CD4-positive, alpha-beta T cell (primary cell): ENCODE measurements at regions of chr10 and their contacts with region 1.

Region 1: GRCh38 chr10:16843252-16843870 is 26.1 kb upstream of the RSU1 start:
- DNase-seq: peak in 3 of 14 experiments; percentile 75 to 81 (median 79)
- ATAC-seq: peak; percentile 66
- H3K4me3 ChIP-seq: no peak overlapping the region
- H3K4me3 Mint-ChIP-seq: no peak overlapping the region
- H3K27ac ChIP-seq: no peak overlapping the region
- H3K27ac Mint-ChIP-seq: no peak overlapping the region
- H3K4me1 ChIP-seq: no peaks in the 10 kb centered on the region
- H3K4me1 Mint-ChIP-seq: peaks cover 7% of the 10 kb centered on the region
- H3K27me3 ChIP-seq: no peaks in the 10 kb centered on the region
- H3K27me3 Mint-ChIP-seq: no peaks in the 10 kb centered on the region
- CTCF ChIP-seq: peak; percentile 80

Region 2: DNA sequence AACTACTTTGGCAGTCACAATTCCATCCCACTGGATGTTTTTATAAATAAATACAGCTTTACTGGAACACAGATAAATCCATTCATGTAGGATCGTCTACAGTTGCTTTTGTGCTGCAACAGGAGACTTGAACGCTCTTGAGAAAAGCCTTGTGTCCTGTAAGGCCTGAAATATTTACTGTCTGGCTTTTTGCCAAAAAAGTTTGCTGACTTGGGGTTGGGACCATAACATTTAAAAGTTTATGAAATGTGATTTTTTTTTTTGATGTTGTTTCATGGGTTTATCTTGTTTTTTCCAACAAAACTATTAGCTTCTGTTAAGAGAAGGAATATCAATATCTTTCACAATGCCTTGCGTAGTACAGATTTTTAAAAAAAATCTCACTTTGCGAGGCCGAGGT is 912.0 kb before region 1 on chr10:
- CTCF ChIA-PET with region 1: no interaction called
- POLR2A ChIA-PET with region 1: no interaction called
- intact Hi-C with region 1: no loop called
- DNase-seq: no peak
- ATAC-seq: no peak
- H3K4me3 ChIP-seq: no peak overlapping the region
- H3K4me3 Mint-ChIP-seq: no peak overlapping the region
- H3K27ac ChIP-seq: no peak overlapping the region
- H3K27ac Mint-ChIP-seq: no peak overlapping the region
- H3K4me1 ChIP-seq: no peaks in the 10 kb centered on the region
- H3K4me1 Mint-ChIP-seq: no peaks in the 10 kb centered on the region
- H3K27me3 ChIP-seq: peaks cover 0 to 5% of the 10 kb centered on the region in 2 experiments
- H3K27me3 Mint-ChIP-seq: peaks cover 24% of the 10 kb centered on the region
- CTCF ChIP-seq: no peak

Region 3: GRCh38 chr10:16777473-16778370 is 65.6 kb before region 1 on chr10:
- CTCF ChIA-PET with region 1: no interaction called
- POLR2A ChIA-PET with region 1: no interaction called
- intact Hi-C with region 1: no loop called
- DNase-seq: peak in 5 of 14 experiments; percentile 6 to 83 (median 65)
- ATAC-seq: peak; percentile 75
- H3K4me3 ChIP-seq: no peak overlapping the region
- H3K4me3 Mint-ChIP-seq: peak overlapping the region; percentile 32
- H3K27ac ChIP-seq: no peak overlapping the region
- H3K27ac Mint-ChIP-seq: peak overlapping the region; percentile 81
- H3K4me1 ChIP-seq: peaks cover 20% of the 10 kb centered on the region
- H3K4me1 Mint-ChIP-seq: peaks cover 39% of the 10 kb centered on the region
- H3K27me3 ChIP-seq: no peaks in the 10 kb centered on the region
- H3K27me3 Mint-ChIP-seq: no peaks in the 10 kb centered on the region
- CTCF ChIP-seq: peak; percentile 89

Region 4: DNA sequence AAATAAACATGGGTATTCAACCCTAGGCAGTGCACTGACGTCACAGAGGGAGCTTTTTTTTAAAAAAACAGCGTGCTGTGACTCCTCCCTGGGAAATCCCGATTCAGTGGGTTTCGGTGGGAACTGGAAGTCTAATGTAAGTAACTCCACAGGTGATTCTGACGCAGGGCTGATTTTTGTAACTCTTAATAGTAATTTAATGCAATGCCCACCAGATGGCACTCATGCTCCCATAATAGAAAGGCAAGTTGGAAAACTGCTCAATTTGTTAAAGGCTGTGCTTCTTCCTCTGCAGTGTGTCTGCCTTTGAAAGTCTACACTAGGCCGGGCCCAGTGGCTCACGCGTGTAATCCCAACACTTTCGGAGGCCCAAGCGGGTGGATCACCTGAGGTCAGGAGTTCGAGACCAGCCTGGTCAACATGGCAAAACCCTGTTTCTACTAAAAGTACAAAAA is 15.2 kb before region 1 on chr10:
- CTCF ChIA-PET with region 1: no interaction called
- POLR2A ChIA-PET with region 1: no interaction called
- intact Hi-C with region 1: loop called (anchors 1 kb)
- DNase-seq: peak; percentile 30 to 88 (median 51)
- ATAC-seq: peak; percentile 99
- H3K4me3 ChIP-seq: no peak overlapping the region
- H3K4me3 Mint-ChIP-seq: no peak overlapping the region
- H3K27ac ChIP-seq: no peak overlapping the region
- H3K27ac Mint-ChIP-seq: no peak overlapping the region
- H3K4me1 ChIP-seq: peaks cover 8% of the 10 kb centered on the region
- H3K4me1 Mint-ChIP-seq: peaks cover 7% of the 10 kb centered on the region
- H3K27me3 ChIP-seq: no peaks in the 10 kb centered on the region
- H3K27me3 Mint-ChIP-seq: no peaks in the 10 kb centered on the region
- CTCF ChIP-seq: peak; percentile 63

Region 5: DNA sequence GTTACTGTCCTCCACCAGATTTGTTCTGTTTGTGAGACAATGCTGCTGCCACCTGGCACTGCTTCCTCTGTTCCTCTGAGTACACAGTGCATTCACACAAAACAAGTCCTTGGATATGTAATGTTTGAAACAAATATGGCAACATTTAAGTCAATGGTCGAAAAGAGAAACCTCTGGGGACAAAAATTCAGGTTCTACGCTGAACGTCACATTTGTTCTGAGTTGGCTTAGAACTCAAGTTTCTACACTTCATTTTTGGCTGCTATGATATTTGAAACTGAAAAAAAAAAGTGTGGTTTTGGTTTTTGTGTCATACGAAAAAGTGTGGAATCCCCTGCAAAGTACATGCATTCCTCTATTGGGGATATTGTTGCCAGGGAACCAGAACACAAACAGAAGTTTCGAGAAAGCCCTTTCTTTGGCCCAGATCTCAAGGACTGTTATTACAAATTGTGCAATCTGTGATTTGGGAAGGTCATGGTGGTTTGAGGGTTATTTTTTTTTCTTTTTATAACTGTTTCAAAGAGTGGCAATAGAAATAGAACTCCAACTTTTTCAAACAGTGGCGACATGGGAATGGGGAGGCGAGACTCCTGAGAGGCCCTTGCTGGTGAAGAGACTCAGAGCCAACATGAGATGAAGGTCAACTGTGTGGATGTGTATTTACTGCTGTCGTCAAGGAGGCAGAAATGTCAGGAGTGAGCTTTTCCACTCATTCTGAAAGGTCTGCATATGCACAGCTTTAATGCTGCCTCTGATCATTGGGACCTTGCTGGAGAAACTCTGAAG is 158.8 kb after region 1 on chr10:
- CTCF ChIA-PET with region 1: no interaction called
- POLR2A ChIA-PET with region 1: no interaction called
- intact Hi-C with region 1: loop called in 1 of 2 experiments (anchors 10 kb)
- DNase-seq: peak in 4 of 14 experiments; percentile 38 to 92 (median 70)
- ATAC-seq: peak; percentile 40
- H3K4me3 ChIP-seq: no peak overlapping the region
- H3K4me3 Mint-ChIP-seq: peak overlapping the region; percentile 59
- H3K27ac ChIP-seq: peak overlapping the region; percentile 21 to 58
- H3K27ac Mint-ChIP-seq: peak overlapping the region; percentile 95
- H3K4me1 ChIP-seq: peaks cover 28% of the 10 kb centered on the region
- H3K4me1 Mint-ChIP-seq: peaks cover 66% of the 10 kb centered on the region
- H3K27me3 ChIP-seq: no peaks in the 10 kb centered on the region
- H3K27me3 Mint-ChIP-seq: no peaks in the 10 kb centered on the region
- CTCF ChIP-seq: no peak

Region 6: GRCh38 chr10:17249820-17250219 is 406.5 kb after region 1 on chr10:
- CTCF ChIA-PET with region 1: no interaction called
- POLR2A ChIA-PET with region 1: no interaction called
- intact Hi-C with region 1: loop called in 1 of 2 experiments (anchors 2 kb)
- DNase-seq: peak in 2 of 14 experiments; percentile 51 to 55
- ATAC-seq: peak; percentile 65
- H3K4me3 ChIP-seq: no peak overlapping the region
- H3K4me3 Mint-ChIP-seq: no peak overlapping the region
- H3K27ac ChIP-seq: no peak overlapping the region
- H3K27ac Mint-ChIP-seq: no peak overlapping the region
- H3K4me1 ChIP-seq: no peaks in the 10 kb centered on the region
- H3K4me1 Mint-ChIP-seq: no peaks in the 10 kb centered on the region
- H3K27me3 ChIP-seq: no peaks in the 10 kb centered on the region
- H3K27me3 Mint-ChIP-seq: no peaks in the 10 kb centered on the region
- CTCF ChIP-seq: peak; percentile 48

Region 7: GRCh38 chr10:17257466-17258321 is 414.3 kb after region 1 on chr10:
- CTCF ChIA-PET with region 1: no interaction called
- POLR2A ChIA-PET with region 1: no interaction called
- intact Hi-C with region 1: loop called (anchors 1 kb)
- DNase-seq: peak in 11 of 14 experiments; percentile 7 to 84 (median 38)
- ATAC-seq: peak; percentile 78
- H3K4me3 ChIP-seq: no peak overlapping the region
- H3K4me3 Mint-ChIP-seq: no peak overlapping the region
- H3K27ac ChIP-seq: no peak overlapping the region
- H3K27ac Mint-ChIP-seq: no peak overlapping the region
- H3K4me1 ChIP-seq: peaks cover 2% of the 10 kb centered on the region
- H3K4me1 Mint-ChIP-seq: peaks cover 7% of the 10 kb centered on the region
- H3K27me3 ChIP-seq: no peaks in the 10 kb centered on the region
- H3K27me3 Mint-ChIP-seq: no peaks in the 10 kb centered on the region
- CTCF ChIP-seq: peak; percentile 84

Region 8: DNA sequence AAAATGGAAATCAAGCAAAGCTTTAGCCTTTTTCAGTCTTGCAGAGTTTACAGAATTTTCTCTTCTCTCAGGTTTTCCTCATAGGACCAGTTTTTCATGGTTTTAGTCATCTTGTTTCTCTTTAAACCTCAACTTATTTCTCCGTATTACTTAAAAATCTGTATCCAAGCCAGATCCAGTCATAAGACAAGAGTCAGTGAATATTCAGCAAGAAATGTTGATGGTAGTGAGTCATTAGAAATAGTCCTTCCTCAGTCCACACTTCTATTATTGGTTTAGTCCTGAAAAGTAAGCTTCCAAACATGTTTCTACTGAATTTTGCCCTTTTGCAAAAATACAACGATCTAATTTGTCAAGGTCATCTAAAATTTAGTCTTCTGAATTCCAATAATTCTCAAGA is 491.7 kb after region 1 on chr10:
- CTCF ChIA-PET with region 1: no interaction called
- POLR2A ChIA-PET with region 1: no interaction called
- intact Hi-C with region 1: no loop called
- DNase-seq: no peak
- ATAC-seq: no peak
- H3K4me3 ChIP-seq: no peak overlapping the region
- H3K4me3 Mint-ChIP-seq: no peak overlapping the region
- H3K27ac ChIP-seq: no peak overlapping the region
- H3K27ac Mint-ChIP-seq: no peak overlapping the region
- H3K4me1 ChIP-seq: no peaks in the 10 kb centered on the region
- H3K4me1 Mint-ChIP-seq: no peaks in the 10 kb centered on the region
- H3K27me3 ChIP-seq: no peaks in the 10 kb centered on the region
- H3K27me3 Mint-ChIP-seq: peaks cover 12% of the 10 kb centered on the region
- CTCF ChIP-seq: no peak

Region 9: DNA sequence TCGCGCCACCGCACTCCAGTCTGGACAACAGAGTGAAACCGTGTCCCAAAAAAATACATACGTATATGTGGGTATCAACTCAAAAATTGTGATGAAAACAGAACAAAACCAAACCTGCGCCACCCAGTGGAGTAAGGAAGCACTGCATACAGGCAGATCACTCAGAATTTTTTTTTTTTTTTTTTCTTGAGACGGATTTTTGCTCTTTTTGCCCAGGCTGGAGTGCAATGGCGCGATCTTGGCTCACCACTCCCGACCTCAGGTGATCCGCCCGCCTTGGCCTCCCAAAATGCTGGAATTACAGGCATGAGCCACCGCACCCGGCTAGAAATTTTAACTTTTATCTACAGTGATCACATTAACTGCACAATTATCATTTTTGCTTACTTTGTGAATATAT is 899.6 kb after region 1 on chr10:
- CTCF ChIA-PET with region 1: no interaction called
- POLR2A ChIA-PET with region 1: no interaction called
- intact Hi-C with region 1: loop called in 1 of 2 experiments (anchors 10 kb)
- DNase-seq: peak; percentile 50 to 78 (median 66)
- ATAC-seq: peak; percentile 44
- H3K4me3 ChIP-seq: no peak overlapping the region
- H3K4me3 Mint-ChIP-seq: no peak overlapping the region
- H3K27ac ChIP-seq: no peak overlapping the region
- H3K27ac Mint-ChIP-seq: no peak overlapping the region
- H3K4me1 ChIP-seq: no peaks in the 10 kb centered on the region
- H3K4me1 Mint-ChIP-seq: peaks cover 5% of the 10 kb centered on the region
- H3K27me3 ChIP-seq: no peaks in the 10 kb centered on the region
- H3K27me3 Mint-ChIP-seq: no peaks in the 10 kb centered on the region
- CTCF ChIP-seq: peak; percentile 89